ENCODE measurements at regions of chr18 and their contacts with region 1.

Region 1: DNA sequence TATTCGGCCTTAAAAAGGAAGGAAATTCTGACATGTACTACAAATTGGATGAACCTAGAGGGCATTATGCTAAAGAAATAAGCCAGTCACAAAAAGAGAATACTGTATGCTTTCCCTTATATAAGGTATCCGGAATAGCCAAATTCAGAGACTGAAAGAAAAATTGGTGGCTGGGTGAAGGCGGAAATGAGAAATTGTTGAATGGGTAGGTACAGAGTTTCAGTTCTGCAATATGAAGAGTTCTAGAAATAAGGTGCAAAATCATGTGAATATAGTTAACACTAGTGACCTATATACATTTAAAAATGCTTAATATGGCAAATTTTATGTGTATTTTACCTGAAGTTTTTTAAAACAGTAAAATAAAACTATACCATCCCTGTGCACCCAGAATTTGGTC is 43.1 kb downstream of the RMP24 start:
- DNase-seq: no peak
- ATAC-seq: no peak
- H3K4me3 ChIP-seq: no peak overlapping the region
- H3K27ac ChIP-seq: no peak overlapping the region
- H3K4me1 ChIP-seq: peaks cover 3% of the 10 kb centered on the region in 2 donors
- H3K27me3 ChIP-seq: no peaks in the 10 kb centered on the region
- CTCF ChIP-seq: no peak
- POLR2A ChIP-seq: no peak

Region 2: GRCh38 chr18:36067055-36067957 is 51.7 kb after region 1 on chr18 and contains the start of gene RPRD1A:
- in situ Hi-C with region 1: no loop called
- intact Hi-C with region 1: loop called (anchors 2 kb)
- DNase-seq: peak; percentile 89 to 93
- ATAC-seq: peak; percentile 97 to 99
- H3K4me3 ChIP-seq: peak within 1 kb of the TSS; percentile 73 to 93 (median 83)
- H3K27ac ChIP-seq: peak within 1 kb of the TSS; percentile 84 to 91 (median 88)
- H3K4me1 ChIP-seq: peaks cover 10 to 15% of the 10 kb centered on the region in 2 donors
- H3K27me3 ChIP-seq: no peaks in the 10 kb centered on the region
- CTCF ChIP-seq: peak in 1 of 5 experiments; percentile 9
- POLR2A ChIP-seq: peak; percentile 47 to 55
- total RNA-seq, gene RPRD1A: 59.6 to 63.8 (median 61.8) TPM

Region 3: DNA sequence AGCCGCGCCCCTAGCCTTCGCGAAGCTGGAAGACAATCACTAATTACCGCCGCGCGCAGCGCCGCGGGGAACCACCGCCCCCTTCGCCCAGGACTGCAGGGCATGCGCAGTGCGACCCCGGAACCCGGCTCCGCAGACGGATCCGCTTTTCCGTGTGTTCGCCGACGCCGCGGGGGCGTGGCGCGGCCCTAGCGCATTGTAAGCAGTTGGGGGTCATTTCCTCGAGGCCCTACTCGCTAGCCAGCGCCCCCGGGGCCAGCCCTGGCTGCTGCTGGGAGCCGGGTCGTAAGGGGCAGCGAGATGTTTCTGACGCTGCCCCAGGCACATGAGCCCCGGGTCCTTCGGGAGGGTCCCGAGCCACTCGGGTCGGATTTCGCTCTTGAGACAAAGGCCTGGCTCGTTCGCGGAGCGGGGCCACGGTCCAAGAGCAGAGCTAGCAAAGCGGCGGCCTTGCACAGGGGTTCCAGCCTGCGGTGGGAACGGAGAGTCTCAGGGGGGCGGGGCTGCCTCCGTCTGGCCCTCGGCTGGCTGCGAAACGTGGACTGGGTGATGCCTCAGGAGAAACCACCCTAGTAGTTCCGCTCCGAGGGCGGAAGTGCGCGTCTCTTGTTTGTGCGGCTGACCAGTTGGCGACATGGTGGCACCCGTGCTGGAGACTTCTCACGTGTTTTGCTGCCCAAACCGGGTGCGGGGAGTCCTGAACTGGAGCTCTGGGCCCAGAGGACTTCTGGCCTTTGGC is 113.8 kb after region 1 on chr18 and contains the starts of genes ELP2 and SLC39A6:
- in situ Hi-C with region 1: no loop called
- intact Hi-C with region 1: loop called (anchors 2 kb)
- DNase-seq: peak; percentile 96 to 98
- ATAC-seq: peak; percentile 96 to 97
- H3K4me3 ChIP-seq: peak within 1 kb of the TSS; percentile 93 to 100 (median 97)
- H3K27ac ChIP-seq: peak within 1 kb of the TSS; percentile 99 to 100 (median 100)
- H3K4me1 ChIP-seq: peaks cover 23 to 30% of the 10 kb centered on the region in 2 donors
- H3K27me3 ChIP-seq: no peaks in the 10 kb centered on the region
- CTCF ChIP-seq: no peak
- POLR2A ChIP-seq: peak; percentile 68 to 72
- total RNA-seq, gene ELP2: 23.7 to 51.0 (median 42.8) TPM
- total RNA-seq, gene SLC39A6: 16.7 to 24.7 (median 18.3) TPM

Region 4: GRCh38 chr18:36572135-36572856 is 556.7 kb after region 1 on chr18:
- in situ Hi-C with region 1: no loop called
- intact Hi-C with region 1: loop called (anchors 1 kb)
- DNase-seq: peak in 1 of 2 donors; percentile 42
- ATAC-seq: peak; percentile 77 to 90
- H3K4me3 ChIP-seq: no peak overlapping the region
- H3K27ac ChIP-seq: no peak overlapping the region
- H3K4me1 ChIP-seq: peaks cover 0 to 6% of the 10 kb centered on the region in 2 donors
- H3K27me3 ChIP-seq: no peaks in the 10 kb centered on the region
- CTCF ChIP-seq: peak; percentile 25 to 56 (median 50)
- POLR2A ChIP-seq: no peak